Natural killer cell (primary cell): ENCODE measurements at regions of chr2 and their contacts with region 1.

Region 1: DNA sequence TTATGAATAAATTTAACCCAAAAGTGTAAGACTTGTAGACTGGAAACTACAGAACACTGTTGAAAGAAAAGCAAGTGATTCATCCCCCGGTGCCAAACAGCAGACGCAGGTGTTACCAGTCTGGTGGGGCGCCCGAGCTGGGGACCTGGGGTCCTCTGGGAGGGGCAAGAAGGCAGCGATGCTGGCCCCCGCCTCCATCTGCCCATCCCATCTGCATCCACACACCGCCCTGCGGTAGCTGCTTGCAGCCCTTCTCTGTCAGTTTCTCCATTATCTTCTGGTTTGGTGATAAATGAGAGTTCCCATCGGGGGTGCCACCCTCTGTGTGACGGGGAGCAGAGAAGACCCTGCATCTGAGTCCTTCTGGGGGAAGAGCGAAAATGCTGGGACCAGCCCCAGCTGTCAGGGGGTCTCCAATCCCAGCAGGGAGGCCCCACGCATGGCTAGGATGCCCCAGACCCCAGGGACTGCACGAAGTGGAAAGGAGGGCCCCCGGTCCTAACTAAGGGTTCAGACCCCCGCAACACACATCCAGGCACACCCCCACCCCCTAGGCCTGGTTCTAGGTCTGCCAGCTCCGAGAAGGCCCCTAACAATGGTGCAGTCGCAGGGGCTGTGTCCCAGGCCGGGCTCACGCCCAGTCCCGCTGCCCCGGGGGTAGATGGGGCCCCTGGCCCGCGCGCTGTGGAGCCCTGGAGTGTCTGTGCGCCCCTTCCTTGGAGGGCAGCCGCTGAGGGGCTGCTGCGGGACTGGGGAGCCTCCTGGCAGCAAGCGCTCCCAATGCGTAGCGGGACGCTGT is 686 bp upstream of the RGPD8 start:
- DNase-seq: peak in 1 of 2 donors; percentile 7
- ATAC-seq: no peak
- H3K4me3 ChIP-seq: no peak overlapping the region
- H3K4me3 Mint-ChIP-seq: no peak overlapping the region
- H3K27ac ChIP-seq: no peak overlapping the region
- H3K27ac Mint-ChIP-seq: peak overlapping the region; percentile 75 to 89
- H3K4me1 ChIP-seq: peaks cover 6% of the 10 kb centered on the region
- H3K4me1 Mint-ChIP-seq: peaks cover 5 to 6% of the 10 kb centered on the region in 2 donors
- H3K27me3 ChIP-seq: no peaks in the 10 kb centered on the region
- H3K27me3 Mint-ChIP-seq: peaks cover 0 to 7% of the 10 kb centered on the region in 2 donors
- CTCF ChIP-seq: no peak

Region 2: DNA sequence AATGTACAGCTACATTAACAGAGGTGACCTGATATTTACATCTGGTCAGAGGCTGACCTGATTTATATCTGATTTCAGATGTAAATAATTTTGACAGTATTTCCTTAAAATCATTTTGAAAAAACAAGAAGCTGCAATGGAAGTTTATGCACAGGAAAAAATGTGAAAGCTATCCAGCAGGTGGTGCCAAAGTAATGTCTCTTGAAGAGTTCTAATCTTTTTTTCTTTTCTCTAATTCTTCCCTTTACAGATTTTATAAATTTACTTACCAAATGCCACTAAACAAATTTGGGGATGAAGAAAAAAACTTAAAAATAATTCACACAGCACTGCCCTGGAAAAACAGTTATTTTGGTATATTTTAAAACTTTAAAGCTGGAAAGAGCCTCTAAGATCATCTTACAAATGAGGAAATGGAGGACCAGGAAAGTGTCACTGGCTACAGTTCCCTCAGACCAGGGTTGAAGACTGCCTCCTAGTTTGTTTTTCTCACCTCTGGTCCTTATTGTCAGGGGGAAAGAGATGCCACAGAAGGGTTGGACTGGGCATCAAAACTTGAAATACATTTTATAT is 312.4 kb before region 1 on chr2:
- intact Hi-C with region 1: loop called (anchors 10 kb)
- DNase-seq: peak in 1 of 2 donors; percentile 77
- ATAC-seq: peak in 1 of 3 donors; percentile 38
- H3K4me3 ChIP-seq: no peak overlapping the region
- H3K4me3 Mint-ChIP-seq: no peak overlapping the region
- H3K27ac ChIP-seq: no peak overlapping the region
- H3K27ac Mint-ChIP-seq: no peak overlapping the region
- H3K4me1 ChIP-seq: no peaks in the 10 kb centered on the region
- H3K4me1 Mint-ChIP-seq: no peaks in the 10 kb centered on the region
- H3K27me3 ChIP-seq: no peaks in the 10 kb centered on the region
- H3K27me3 Mint-ChIP-seq: no peaks in the 10 kb centered on the region
- CTCF ChIP-seq: peak; percentile 64

Region 3: DNA sequence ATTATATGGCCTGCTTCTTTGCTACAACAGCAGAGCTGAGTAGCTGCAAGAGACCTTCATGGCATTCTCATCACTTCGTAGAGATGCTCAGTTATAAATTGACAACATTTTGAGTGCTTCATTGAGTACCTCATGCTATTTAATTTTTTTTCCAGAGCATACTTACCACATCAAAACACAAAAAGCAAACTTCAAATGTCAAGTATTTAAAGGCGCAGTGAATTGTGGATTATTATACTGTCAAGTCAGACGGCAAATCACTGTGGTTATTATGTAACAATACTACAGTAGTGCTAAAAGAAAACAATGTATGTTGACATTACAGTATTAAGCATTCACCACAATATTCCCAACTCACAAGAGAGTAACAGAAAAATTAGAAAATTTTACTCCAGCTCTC is 191.7 kb before region 1 on chr2:
- intact Hi-C with region 1: no loop called
- DNase-seq: peak in 1 of 2 donors; percentile 15
- ATAC-seq: no peak
- H3K4me3 ChIP-seq: no peak overlapping the region
- H3K4me3 Mint-ChIP-seq: no peak overlapping the region
- H3K27ac ChIP-seq: no peak overlapping the region
- H3K27ac Mint-ChIP-seq: no peak overlapping the region
- H3K4me1 ChIP-seq: no peaks in the 10 kb centered on the region
- H3K4me1 Mint-ChIP-seq: peaks cover 0 to 5% of the 10 kb centered on the region in 2 donors
- H3K27me3 ChIP-seq: no peaks in the 10 kb centered on the region
- H3K27me3 Mint-ChIP-seq: no peaks in the 10 kb centered on the region
- CTCF ChIP-seq: no peak